Heart right ventricle (tissue), 16 donors: ENCODE measurements at regions of chr1 and their contacts with region 1.

Region 1: DNA sequence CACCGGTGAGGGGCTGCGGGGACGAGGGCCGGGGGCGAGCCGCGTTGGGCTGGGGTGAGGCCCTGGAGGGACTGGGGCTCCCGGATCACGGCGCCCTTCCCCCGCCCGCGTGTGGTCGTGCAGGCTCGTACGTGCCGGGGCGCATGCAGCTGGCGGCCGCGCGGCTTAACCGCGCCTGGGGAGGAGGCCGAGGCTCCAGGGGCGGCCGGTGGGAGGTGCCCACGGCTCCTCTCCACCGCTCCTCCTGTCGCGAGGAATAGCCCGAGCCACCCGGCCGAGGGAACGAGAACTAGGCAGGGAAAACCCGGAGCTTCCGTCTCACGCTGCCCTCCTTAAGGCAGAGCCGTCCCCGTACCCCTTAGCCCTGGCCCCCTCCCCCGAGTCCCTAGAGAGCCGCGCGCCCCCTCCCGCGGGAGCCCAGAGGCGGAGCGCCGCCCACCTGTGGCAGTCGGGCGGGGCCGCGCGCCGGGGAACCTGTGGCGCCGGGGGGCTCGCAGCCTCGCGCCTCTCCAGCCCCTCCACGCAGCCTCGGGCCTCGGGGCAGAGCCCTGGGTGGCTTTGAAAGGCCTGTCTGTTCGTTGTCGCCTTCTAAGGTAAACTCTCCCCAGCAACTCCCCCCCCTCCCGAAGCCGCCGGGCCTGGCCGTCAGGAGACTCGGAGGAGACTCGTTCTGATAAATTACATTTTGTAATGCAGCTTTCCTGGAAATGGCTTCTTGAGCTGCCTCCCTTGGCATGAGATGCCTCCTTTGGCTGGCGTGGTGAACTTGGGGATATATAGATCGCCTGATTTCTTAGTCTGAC is 746 bp downstream of the AK4 start:
- DNase-seq: peak; percentile 32 to 60
- ATAC-seq: peak; percentile 59 to 88 (median 73)
- H3K4me3 ChIP-seq: peak overlapping the region; percentile 77 to 94 (median 86)
- H3K27ac ChIP-seq: peak overlapping the region; percentile 55 to 95 (median 88)
- H3K4me1 ChIP-seq: peaks cover 0 to 38% (median 18%) of the 10 kb centered on the region in 9 donors
- H3K27me3 ChIP-seq: peaks cover 0 to 25% (median 0%) of the 10 kb centered on the region in 7 donors
- CTCF ChIP-seq: no peak

Region 2: GRCh38 chr1:65182658-65183268 is 34.0 kb after region 1 on chr1:
- intact Hi-C with region 1: loop called in 1 of 10 experiments (anchors 5 kb)
- DNase-seq: no peak
- ATAC-seq: no peak
- H3K4me3 ChIP-seq: no peak overlapping the region
- H3K27ac ChIP-seq: peak overlapping the region in 2 of 10 donors; percentile 17 to 26
- H3K4me1 ChIP-seq: peaks cover under 1 to 50% (median 24%) of the 10 kb centered on the region in 9 donors
- H3K27me3 ChIP-seq: no peaks in the 10 kb centered on the region
- CTCF ChIP-seq: no peak

Region 3: GRCh38 chr1:65209005-65209885 is 60.5 kb after region 1 on chr1:
- intact Hi-C with region 1: loop called in 4 of 10 experiments (anchors 2 to 10 kb)
- DNase-seq: peak in 1 of 2 donors; percentile 63
- ATAC-seq: peak; percentile 31 to 71 (median 60)
- H3K4me3 ChIP-seq: peak overlapping the region in 1 of 10 donors; percentile 11
- H3K27ac ChIP-seq: peak overlapping the region in 3 of 10 donors; percentile 17 to 51 (median 23)
- H3K4me1 ChIP-seq: peaks cover 0 to 31% (median 15%) of the 10 kb centered on the region in 9 donors
- H3K27me3 ChIP-seq: no peaks in the 10 kb centered on the region
- CTCF ChIP-seq: peak; percentile 36 to 82 (median 71)